ENCODE measurements at regions of chr19 and their contacts with region 1.

Region 1: GRCh38 chr19:662962-663681 is at the start of gene RNF126:
- DNase-seq: peak; percentile 94
- ATAC-seq: peak; percentile 56
- H3K4me3 Mint-ChIP-seq: peak within 1 kb of the TSS; percentile 98
- H3K27ac Mint-ChIP-seq: peak within 1 kb of the TSS; percentile 97
- H3K4me1 Mint-ChIP-seq: peaks cover 42% of the 10 kb centered on the region
- H3K27me3 Mint-ChIP-seq: peaks cover 2% of the 10 kb centered on the region
- total RNA-seq, gene RNF126: 71.3 to 78.4 TPM

Region 2: GRCh38 chr19:680287-681028 is 17.3 kb after region 1 on chr19:
- CTCF ChIA-PET with region 1: interaction called, 3 read pairs
- POLR2A ChIA-PET with region 1: interaction called, 10 read pairs
- DNase-seq: peak; percentile 100
- ATAC-seq: peak; percentile 86
- H3K4me3 Mint-ChIP-seq: peak overlapping the region; percentile 83
- H3K27ac Mint-ChIP-seq: peak overlapping the region; percentile 98
- H3K4me1 Mint-ChIP-seq: peaks cover 9% of the 10 kb centered on the region
- H3K27me3 Mint-ChIP-seq: peaks cover 8% of the 10 kb centered on the region

Region 3: DNA sequence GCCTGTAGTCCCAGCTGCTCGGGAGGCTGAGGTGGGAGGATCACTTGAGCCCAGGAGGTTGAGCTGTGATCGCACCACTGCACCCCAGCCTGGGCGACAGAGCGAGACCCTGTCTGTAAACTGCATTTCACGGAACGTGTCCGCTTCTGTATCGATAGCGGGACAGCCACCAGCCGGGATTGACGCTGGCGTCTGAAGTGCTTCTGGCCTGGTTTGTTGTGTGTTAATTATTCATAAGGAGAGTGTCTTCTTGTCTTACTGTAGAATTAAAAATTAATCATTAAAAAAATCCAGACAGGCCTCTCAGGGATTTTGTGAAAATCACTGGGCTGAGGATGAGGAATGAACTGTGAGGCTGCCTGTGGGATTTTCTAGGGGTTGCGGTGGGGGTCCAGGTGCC is 71.6 kb after region 1 on chr19:
- CTCF ChIA-PET with region 1: interaction called, 14 read pairs
- POLR2A ChIA-PET with region 1: interaction called, 3 read pairs
- DNase-seq: no peak
- ATAC-seq: no peak
- H3K4me3 Mint-ChIP-seq: no peak overlapping the region
- H3K27ac Mint-ChIP-seq: no peak overlapping the region
- H3K4me1 Mint-ChIP-seq: peaks cover 16% of the 10 kb centered on the region
- H3K27me3 Mint-ChIP-seq: peaks cover 2% of the 10 kb centered on the region

Measured in activated CD8-positive, alpha-beta T cell treated with anti-CD3 and anti-CD28 coated beads, Interleukin-2, amount 10 ng/mL, durations not matched to agents 7 days and 5 days (primary cell).